ENCODE measurements at regions of chrX and their contacts with region 1.

Region 1: DNA sequence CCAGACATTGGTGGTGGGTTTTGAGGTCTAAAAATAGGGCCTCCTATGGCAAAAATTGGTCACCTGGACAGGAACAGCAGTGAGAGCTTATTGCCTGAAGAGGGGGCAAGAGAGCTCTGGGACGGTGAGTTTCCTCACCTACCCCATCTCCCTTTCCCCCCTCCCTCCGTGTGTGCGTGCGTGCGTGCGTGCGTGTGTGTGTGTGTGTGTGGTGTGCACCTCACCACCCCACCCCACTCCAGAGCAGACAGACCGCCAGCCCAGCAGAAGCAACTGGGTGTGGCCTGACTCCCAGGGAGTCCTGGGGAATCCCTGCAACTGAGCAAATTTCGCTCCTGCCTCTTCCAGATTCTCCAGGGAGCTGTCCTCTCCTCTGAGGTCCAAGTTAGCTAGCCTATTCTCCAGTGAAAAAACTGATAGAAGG is 44.7 kb downstream of the PRPS1 start:
- DNase-seq: peak; percentile 5
- H3K4me3 ChIP-seq: no peak overlapping the region
- H3K27me3 ChIP-seq: no peaks in the 10 kb centered on the region
- CTCF ChIP-seq: peak; percentile 65

Region 2: GRCh38 chrX:107716816-107717700 is 44.1 kb after region 1 on chrX:
- CTCF ChIA-PET with region 1: interaction called, 27 read pairs
- POLR2A ChIA-PET with region 1: no interaction called
- DNase-seq: peak; percentile 45
- H3K4me3 ChIP-seq: peak overlapping the region; percentile 67
- H3K27me3 ChIP-seq: no peaks in the 10 kb centered on the region; the same call in 1 of the 2 replicates
- CTCF ChIP-seq: no peak

Region 3: DNA sequence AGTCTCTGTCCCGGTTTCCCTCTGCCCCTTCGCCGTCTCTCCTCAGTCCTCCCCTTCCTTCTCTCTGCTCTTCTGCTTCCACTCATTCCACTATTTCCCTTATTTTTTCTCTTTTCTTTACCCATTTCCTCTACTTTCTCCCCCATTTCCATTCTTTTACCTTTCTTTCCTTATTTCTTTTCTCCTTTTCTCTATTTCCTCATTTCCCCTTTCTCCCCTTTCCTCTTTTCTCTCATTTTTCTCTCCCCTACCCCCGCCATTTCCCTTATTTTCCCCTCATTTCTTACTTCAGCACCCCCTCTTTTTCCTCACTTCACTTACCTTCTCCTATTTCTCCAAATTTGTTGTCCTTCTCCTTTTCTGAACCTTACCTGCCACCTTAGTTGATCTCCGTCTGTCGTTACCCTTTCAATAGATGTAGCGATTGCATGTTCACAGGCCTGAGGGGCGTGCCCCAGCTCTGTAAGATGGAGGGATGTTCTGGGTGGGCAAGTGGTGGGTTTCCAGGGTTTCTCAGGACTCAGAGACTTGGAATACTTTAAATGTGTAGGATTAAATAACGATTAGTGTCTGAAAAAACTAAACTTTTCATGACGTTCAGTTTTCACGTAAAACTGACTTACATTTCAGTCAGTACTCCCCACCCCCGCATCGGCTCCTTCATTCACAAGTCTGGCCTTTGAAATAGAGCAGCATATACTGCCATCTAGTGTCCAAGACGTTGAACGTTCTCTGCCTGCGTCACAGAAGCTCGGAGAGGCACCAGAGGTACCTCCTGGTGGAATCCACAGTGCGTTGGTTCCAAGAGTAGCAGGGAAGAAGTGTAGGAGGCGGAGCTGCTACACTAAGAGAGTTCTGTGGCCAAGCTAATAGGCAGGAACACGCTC is 103.9 kb after region 1 on chrX:
- CTCF ChIA-PET with region 1: interaction called, 19 read pairs
- POLR2A ChIA-PET with region 1: no interaction called
- DNase-seq: peak; percentile 31
- H3K4me3 ChIP-seq: peak overlapping the region; percentile 42
- H3K27me3 ChIP-seq: peaks cover 4% of the 10 kb centered on the region; the same call in 1 of the 2 replicates
- CTCF ChIP-seq: peak; percentile 59

Measured in BJ (cell line).